PC-9 (cell line): ENCODE measurements at regions of chr18 and their contacts with region 1.

Region 1: DNA sequence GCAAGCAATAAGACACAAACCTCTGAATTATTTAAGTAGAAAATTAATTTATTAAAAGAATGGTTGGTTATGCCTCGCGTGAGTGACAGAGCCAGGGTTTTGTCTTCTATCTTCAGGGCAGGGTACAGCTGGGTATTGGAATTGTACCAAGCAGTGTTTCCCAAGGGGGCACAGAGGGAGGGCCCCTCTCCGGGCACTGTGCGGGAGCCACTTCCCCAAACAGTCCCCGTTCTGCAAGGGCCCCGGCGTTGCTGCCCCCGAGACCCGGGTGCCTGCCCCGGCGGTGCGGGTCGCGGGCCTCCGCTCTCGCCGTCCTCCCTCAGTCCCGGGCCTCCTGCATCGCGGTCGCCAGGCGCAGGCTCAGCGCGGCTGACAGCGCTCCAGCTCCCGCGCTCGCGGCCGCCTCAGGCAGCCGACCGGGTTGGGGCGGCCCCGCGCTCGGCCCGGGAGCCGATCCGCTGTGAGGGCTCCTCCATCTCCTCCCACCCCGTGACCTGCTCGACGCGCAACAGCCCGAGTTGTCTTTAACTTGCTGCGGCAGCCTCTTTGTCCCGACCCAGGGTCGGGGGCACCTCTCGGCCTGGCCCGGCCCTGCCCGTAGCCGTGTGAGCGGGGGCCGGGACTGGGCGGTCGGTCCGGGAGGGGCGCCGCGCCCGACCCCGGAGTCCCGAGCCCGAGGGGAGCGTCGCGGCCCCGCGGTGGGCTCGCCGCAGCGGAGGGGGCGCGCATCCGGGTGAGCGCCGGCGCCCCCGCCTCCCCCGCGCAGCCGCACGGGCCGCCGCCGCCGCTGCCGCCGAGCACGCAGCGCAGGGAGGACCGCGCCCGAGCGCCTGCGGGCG is 620 bp upstream of the GALNT1 start:
- DNase-seq: peak; percentile 35
- H3K4me3 ChIP-seq: peak overlapping the region; percentile 65
- H3K27ac ChIP-seq: no peak overlapping the region
- H3K4me1 ChIP-seq: peaks cover 20% of the 10 kb centered on the region
- H3K27me3 ChIP-seq: no peaks in the 10 kb centered on the region
- CTCF ChIP-seq: no peak

Region 2: GRCh38 chr18:35616664-35617423 is 35.9 kb after region 1 on chr18:
- CTCF ChIA-PET with region 1: no interaction called
- POLR2A ChIA-PET with region 1: no interaction called
- intact Hi-C with region 1: loop called (anchors 2 kb)
- DNase-seq: peak; percentile 48 to 66
- H3K4me3 ChIP-seq: no peak overlapping the region
- H3K27ac ChIP-seq: peak overlapping the region; percentile 48
- H3K4me1 ChIP-seq: 0 out of 2 replicates have a peak, but pooled peaks cover 10% of the 10 kb centered on the region
- H3K27me3 ChIP-seq: no peaks in the 10 kb centered on the region
- CTCF ChIP-seq: no peak